ENCODE measurements at regions of chr3 and their contacts with region 1.

Region 1: DNA sequence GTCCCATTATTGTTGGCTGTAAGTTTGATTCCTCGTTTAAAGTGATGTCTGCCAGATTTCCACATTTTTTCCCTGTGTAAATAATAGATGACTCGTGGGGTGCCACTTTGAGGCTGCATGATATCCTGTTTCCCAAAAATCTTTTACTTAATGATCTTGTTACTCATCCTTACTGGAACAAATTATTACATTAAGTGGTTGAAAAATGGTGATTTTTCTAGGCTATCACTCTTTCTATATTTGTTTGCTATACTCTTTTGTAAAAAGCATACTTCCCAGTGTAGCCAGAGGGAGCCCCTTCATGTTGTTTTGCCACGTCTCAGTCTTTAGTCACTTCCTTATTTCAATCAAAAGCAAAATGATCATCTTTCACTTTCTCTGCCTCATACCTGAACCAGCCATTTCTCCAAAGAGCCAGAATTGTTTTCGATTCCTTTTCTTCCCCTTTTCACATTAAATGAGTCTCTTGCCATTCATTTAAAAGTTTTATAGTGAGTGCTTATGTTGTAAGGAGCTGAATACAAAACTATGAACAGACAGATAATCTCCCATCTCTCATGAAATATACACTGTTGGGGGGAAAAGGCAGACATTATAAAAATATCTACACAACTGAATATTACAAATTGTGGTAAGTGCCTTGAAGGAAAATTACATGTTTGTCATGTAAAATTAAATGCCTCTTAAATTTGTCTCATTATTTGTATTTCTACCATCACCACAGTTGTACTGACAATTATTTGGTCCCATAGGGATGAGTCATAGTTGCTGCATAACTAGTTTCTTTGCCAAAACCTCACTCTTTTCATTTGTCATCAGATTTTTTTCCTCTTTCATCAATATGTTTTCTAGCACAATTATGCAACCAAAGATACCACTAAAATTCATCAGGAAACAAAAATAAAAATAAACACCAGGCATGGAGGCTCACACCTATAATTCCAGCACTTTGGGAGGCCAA is 41.5 kb downstream of the ADGRG7 start:
- DNase-seq: peak in 4 of 9 donors; percentile 8 to 52 (median 24)
- ATAC-seq: peak; percentile 77
- H3K4me3 ChIP-seq: no peak overlapping the region
- H3K4me3 Mint-ChIP-seq: peak overlapping the region in 8 of 10 donors; percentile 23 to 75 (median 51)
- H3K27ac ChIP-seq: no peak overlapping the region
- H3K27ac Mint-ChIP-seq: peak overlapping the region in 8 of 9 donors; percentile 16 to 90 (median 53)
- H3K4me1 ChIP-seq: no peaks in the 10 kb centered on the region
- H3K4me1 Mint-ChIP-seq: peaks cover 3 to 13% (median 9%) of the 10 kb centered on the region in 7 donors
- H3K27me3 ChIP-seq: peaks cover 0 to 3% of the 10 kb centered on the region in 2 donors
- H3K27me3 Mint-ChIP-seq: peaks cover 0 to 4% (median 0%) of the 10 kb centered on the region in 5 donors

Region 2: GRCh38 chr3:99808151-99808794 is 842.7 kb before region 1 on chr3:
- CTCF ChIA-PET with region 1: no interaction called
- POLR2A ChIA-PET with region 1: no interaction called
- intact Hi-C with region 1: no loop called
- DNase-seq: peak in 7 of 9 donors; percentile 23 to 38 (median 31)
- ATAC-seq: peak; percentile 67
- H3K4me3 ChIP-seq: no peak overlapping the region
- H3K4me3 Mint-ChIP-seq: no peak overlapping the region
- H3K27ac ChIP-seq: no peak overlapping the region
- H3K27ac Mint-ChIP-seq: peak overlapping the region in 1 of 9 donors; percentile 72
- H3K4me1 ChIP-seq: no peaks in the 10 kb centered on the region
- H3K4me1 Mint-ChIP-seq: peaks cover 0 to 4% (median 0%) of the 10 kb centered on the region in 7 donors
- H3K27me3 ChIP-seq: no peaks in the 10 kb centered on the region
- H3K27me3 Mint-ChIP-seq: peaks cover 0 to 5% (median 0%) of the 10 kb centered on the region in 5 donors

Region 3: DNA sequence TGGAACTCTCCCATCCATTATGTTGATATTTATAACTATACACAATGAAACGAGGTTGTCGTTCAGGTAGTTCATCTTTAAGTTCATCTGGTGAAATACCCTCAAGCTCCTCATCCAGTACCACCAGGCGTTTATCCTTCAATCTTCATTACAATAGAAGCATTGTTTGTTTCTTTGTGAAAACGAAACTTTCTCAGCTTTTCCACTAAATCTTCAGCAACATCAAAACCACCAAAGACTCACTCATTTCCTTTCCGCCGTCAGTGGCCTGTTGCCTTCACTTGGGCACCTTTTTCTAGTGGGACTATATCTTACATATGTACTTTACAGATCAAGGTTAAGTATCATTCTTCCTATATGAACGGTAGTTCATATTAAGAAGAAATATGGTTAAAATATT is 14.3 kb after region 1 on chr3:
- CTCF ChIA-PET with region 1: interaction called, 4 read pairs
- POLR2A ChIA-PET with region 1: no interaction called
- intact Hi-C with region 1: loop called in 1 of 2 experiments (anchors 1 kb)
- DNase-seq: peak in 7 of 9 donors; percentile 18 to 42 (median 28)
- ATAC-seq: peak; percentile 72
- H3K4me3 ChIP-seq: no peak overlapping the region
- H3K4me3 Mint-ChIP-seq: peak overlapping the region; percentile 46 to 87 (median 76)
- H3K27ac ChIP-seq: peak overlapping the region; percentile 9
- H3K27ac Mint-ChIP-seq: peak overlapping the region; percentile 28 to 88 (median 73)
- H3K4me1 ChIP-seq: peaks cover 0 to 8% of the 10 kb centered on the region in 2 donors
- H3K4me1 Mint-ChIP-seq: peaks cover 7 to 35% (median 17%) of the 10 kb centered on the region in 7 donors
- H3K27me3 ChIP-seq: no peaks in the 10 kb centered on the region
- H3K27me3 Mint-ChIP-seq: peaks cover 0 to 8% (median 0%) of the 10 kb centered on the region in 5 donors

Region 4: DNA sequence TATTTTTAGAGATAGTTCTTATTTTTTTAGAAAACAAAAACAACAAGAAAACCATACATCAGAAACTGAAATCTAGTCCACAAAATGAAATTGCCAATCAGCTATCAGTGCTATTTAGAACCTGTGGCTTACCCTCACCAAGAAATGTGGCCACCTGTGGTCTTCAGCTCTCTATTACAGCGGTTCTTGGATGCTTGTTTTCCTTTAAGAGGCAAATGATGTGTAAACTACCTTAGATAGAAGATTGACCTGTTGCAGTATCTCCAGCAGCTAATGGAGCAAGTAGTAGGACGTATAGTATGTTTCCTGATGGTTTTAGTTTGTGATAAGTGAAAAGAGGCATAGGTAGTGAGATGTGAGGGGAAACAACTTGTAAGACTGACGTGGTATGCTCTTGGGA is 79.6 kb after region 1 on chr3:
- CTCF ChIA-PET with region 1: no interaction called
- POLR2A ChIA-PET with region 1: no interaction called
- intact Hi-C with region 1: loop called in 1 of 2 experiments (anchors 5 kb)
- DNase-seq: no peak
- ATAC-seq: no peak
- H3K4me3 ChIP-seq: no peak overlapping the region
- H3K4me3 Mint-ChIP-seq: no peak overlapping the region
- H3K27ac ChIP-seq: no peak overlapping the region
- H3K27ac Mint-ChIP-seq: peak overlapping the region in 2 of 9 donors; percentile 1 to 4
- H3K4me1 ChIP-seq: no peaks in the 10 kb centered on the region
- H3K4me1 Mint-ChIP-seq: peaks cover 5 to 36% (median 26%) of the 10 kb centered on the region in 7 donors
- H3K27me3 ChIP-seq: no peaks in the 10 kb centered on the region
- H3K27me3 Mint-ChIP-seq: no peaks in the 10 kb centered on the region

Region 5: DNA sequence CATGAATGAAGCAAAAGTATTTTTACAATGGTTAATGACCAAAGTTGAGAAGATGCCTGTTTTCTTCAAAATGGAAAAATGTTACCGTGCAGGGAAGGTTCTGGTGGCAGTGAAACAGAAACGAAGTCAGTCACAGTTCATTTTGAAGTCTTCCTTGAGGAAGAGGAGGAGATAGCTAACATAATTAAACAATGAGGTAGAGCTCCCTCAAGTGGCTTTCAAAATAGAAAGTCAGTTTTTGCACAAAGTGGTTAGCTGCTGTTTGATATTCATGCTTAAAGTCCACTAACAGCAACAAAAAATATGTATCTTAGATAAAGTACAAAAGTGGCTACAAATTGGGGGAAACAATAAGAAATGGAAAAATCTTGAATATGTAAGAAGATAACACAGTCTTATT is 145.6 kb after region 1 on chr3:
- CTCF ChIA-PET with region 1: no interaction called
- POLR2A ChIA-PET with region 1: no interaction called
- intact Hi-C with region 1: loop called (anchors 1 to 2 kb)
- DNase-seq: peak in 1 of 9 donors; percentile 1
- ATAC-seq: no peak
- H3K4me3 ChIP-seq: no peak overlapping the region
- H3K4me3 Mint-ChIP-seq: peak overlapping the region in 6 of 10 donors; percentile 22 to 68 (median 48)
- H3K27ac ChIP-seq: no peak overlapping the region
- H3K27ac Mint-ChIP-seq: peak overlapping the region in 2 of 9 donors; percentile 43 to 51
- H3K4me1 ChIP-seq: no peaks in the 10 kb centered on the region
- H3K4me1 Mint-ChIP-seq: peaks cover 0 to 7% (median 5%) of the 10 kb centered on the region in 7 donors
- H3K27me3 ChIP-seq: no peaks in the 10 kb centered on the region
- H3K27me3 Mint-ChIP-seq: peaks cover 0 to 22% (median 0%) of the 10 kb centered on the region in 5 donors

Region 6: GRCh38 chr3:101703169-101703568 is 1052.2 kb after region 1 on chr3:
- CTCF ChIA-PET with region 1: no interaction called
- POLR2A ChIA-PET with region 1: no interaction called
- intact Hi-C with region 1: loop called in 1 of 2 experiments (anchors 5 kb)
- DNase-seq: no peak
- ATAC-seq: no peak
- H3K4me3 ChIP-seq: no peak overlapping the region
- H3K4me3 Mint-ChIP-seq: no peak overlapping the region
- H3K27ac ChIP-seq: no peak overlapping the region
- H3K27ac Mint-ChIP-seq: no peak overlapping the region
- H3K4me1 ChIP-seq: no peaks in the 10 kb centered on the region
- H3K4me1 Mint-ChIP-seq: no peaks in the 10 kb centered on the region
- H3K27me3 ChIP-seq: no peaks in the 10 kb centered on the region
- H3K27me3 Mint-ChIP-seq: no peaks in the 10 kb centered on the region